Mammary epithelial cell (primary cell): ENCODE measurements at regions of chr10 and their contacts with region 1.

Region 1: GRCh38 chr10:43671656-43672531 is 23.2 kb upstream of the ZNF32 start:
- DNase-seq: peak; percentile 46
- H3K4me3 ChIP-seq: no peak overlapping the region
- H3K27ac ChIP-seq: no peak overlapping the region
- H3K4me1 ChIP-seq: no peaks in the 10 kb centered on the region
- H3K27me3 ChIP-seq: no peaks in the 10 kb centered on the region
- CTCF ChIP-seq: peak; percentile 67 to 68

Region 2: GRCh38 chr10:44386546-44387052 is 714.7 kb after region 1 on chr10:
- CTCF ChIA-PET with region 1: no interaction called
- dilution Hi-C with region 1: no loop called
- in situ Hi-C with region 1: no loop called
- intact Hi-C with region 1: loop called (anchors 1 kb)
- DNase-seq: peak; percentile 14
- H3K4me3 ChIP-seq: no peak overlapping the region
- H3K27ac ChIP-seq: no peak overlapping the region
- H3K4me1 ChIP-seq: no peaks in the 10 kb centered on the region
- H3K27me3 ChIP-seq: peaks cover 7% of the 10 kb centered on the region
- CTCF ChIP-seq: peak; percentile 24 to 72

Region 3: DNA sequence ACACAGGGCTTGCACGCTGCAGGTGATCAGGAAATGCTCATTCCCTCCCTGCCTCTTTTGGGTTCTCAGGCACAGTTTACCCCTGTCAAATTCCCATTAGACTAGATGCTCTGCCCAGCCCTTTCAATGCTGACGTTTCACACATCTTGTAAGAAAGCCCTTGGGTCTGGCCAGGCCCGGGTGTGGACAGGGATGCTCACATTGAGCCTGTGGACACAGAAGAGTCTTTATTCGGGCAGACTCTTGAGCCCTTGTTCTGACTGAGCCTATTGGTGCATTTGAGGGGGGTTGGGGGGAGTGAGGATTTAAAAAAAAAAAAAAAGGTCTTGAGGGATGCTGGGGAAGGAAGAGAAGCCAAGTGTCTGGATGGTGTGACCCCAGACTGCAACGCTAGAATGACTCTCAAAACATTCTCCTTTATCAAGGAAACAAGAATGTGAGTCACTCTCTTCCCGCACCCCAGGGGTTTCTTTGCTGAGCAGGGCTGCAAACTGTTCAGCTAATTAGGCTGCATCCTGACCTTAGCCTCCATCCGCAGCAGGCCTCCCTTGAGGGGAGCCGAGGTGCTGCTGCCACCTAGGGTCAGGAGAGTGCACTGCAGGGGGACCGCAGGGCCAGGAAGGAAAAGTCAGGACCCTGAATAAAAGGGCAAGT is 1185.6 kb after region 1 on chr10:
- CTCF ChIA-PET with region 1: no interaction called
- dilution Hi-C with region 1: loop called (anchors 25 kb)
- in situ Hi-C with region 1: loop called (anchors 10 kb)
- intact Hi-C with region 1: loop called (anchors 2 kb)
- DNase-seq: peak; percentile 14
- H3K4me3 ChIP-seq: no peak overlapping the region
- H3K27ac ChIP-seq: no peak overlapping the region
- H3K4me1 ChIP-seq: no peaks in the 10 kb centered on the region
- H3K27me3 ChIP-seq: no peaks in the 10 kb centered on the region
- CTCF ChIP-seq: peak; percentile 95 to 98

Region 4: DNA sequence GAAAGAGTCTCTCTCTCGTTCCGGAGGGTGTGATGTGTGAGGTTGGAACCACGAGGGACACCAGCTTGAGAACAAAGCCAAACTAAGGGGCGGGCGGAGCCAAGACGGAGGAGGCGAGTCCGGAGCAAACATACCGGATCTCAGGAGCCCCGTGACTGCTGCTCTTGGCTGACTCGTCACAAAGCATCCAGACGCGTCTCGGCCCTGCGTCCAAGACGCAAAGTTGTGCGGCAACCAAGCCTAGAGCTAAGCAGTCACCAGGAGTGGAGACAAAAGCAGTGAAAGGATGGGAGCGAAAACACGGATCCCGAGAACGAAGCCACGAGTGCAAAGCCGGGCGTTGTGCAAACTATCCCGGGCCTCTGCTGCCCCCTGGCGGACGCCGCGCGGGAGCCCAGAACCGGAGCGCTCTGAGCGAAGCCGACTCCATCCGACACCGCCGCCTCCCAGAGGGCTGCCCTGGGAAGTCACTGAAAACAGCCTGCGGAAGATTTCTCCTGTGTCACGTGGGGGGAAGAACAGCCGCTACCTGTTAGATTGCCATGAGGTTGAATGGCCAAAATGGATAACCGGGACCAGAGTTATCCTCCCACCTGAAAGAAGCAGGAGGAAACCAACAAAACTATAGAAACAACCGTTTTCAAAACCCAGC is 1192.9 kb after region 1 on chr10:
- CTCF ChIA-PET with region 1: no interaction called
- dilution Hi-C with region 1: loop called (anchors 25 kb)
- in situ Hi-C with region 1: loop called (anchors 10 kb)
- intact Hi-C with region 1: loop called (anchors 1 kb)
- DNase-seq: peak; percentile 69
- H3K4me3 ChIP-seq: peak overlapping the region; percentile 24 to 62 (median 58)
- H3K27ac ChIP-seq: no peak overlapping the region
- H3K4me1 ChIP-seq: peaks cover 15% of the 10 kb centered on the region
- H3K27me3 ChIP-seq: no peaks in the 10 kb centered on the region
- CTCF ChIP-seq: peak; percentile 78 to 93